MCF 10A (cell line): ENCODE measurements at regions of chr6 and their contacts with region 1.

Region 1: GRCh38 chr6:73739096-73739495 is 43.1 kb downstream of the CD109 start:
- DNase-seq: peak; percentile 68
- H3K4me3 Mint-ChIP-seq: no peak overlapping the region
- H3K27ac Mint-ChIP-seq: no peak overlapping the region
- H3K4me1 Mint-ChIP-seq: peaks cover 28% of the 10 kb centered on the region
- H3K27me3 Mint-ChIP-seq: no peaks in the 10 kb centered on the region
- CTCF ChIP-seq: peak; percentile 75

Region 2: GRCh38 chr6:73803562-73804241 is 64.6 kb after region 1 on chr6:
- CTCF ChIA-PET with region 1: interaction called, 3 read pairs
- POLR2A ChIA-PET with region 1: interaction called, 3 read pairs
- intact Hi-C with region 1: loop called (anchors 1 kb)
- DNase-seq: peak; percentile 80
- H3K4me3 Mint-ChIP-seq: no peak overlapping the region
- H3K27ac Mint-ChIP-seq: peak overlapping the region; percentile 75
- H3K4me1 Mint-ChIP-seq: peaks cover 25% of the 10 kb centered on the region
- H3K27me3 Mint-ChIP-seq: no peaks in the 10 kb centered on the region
- CTCF ChIP-seq: peak; percentile 42

Region 3: DNA sequence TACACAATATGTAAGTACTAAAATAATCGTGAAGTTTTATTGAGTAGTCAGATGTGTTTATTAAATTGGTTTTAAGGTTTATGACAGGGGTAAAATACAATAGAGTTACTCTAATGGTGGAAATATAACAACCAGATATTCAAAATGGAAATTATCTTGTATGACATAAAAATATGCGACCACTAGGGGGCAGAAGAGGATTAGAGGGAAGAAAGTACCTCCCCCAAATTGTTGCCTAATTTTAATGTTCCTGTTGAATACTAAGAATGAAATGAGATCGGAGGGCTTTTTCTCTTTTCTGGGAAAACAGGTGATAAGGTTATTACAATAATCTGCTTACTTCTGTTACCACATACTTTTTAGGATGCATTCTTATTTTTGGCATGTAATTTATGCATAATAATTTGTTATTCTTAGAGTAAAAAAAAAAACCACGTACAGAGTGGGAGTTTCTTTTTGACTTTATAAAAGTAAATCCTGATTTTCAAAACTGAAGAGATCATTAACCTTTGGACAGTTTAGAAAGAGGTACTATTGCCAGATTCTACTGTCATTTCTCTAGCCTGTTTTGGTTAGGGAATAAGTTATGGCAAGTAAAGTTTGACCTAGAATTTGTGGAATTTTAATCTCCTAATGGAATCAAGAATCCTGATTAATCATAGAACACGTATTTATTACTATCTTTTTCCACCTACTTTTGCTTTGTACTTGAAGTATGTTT is 116.1 kb after region 1 on chr6:
- CTCF ChIA-PET with region 1: interaction called, 4 read pairs
- POLR2A ChIA-PET with region 1: no interaction called
- intact Hi-C with region 1: loop called (anchors 2 kb)
- DNase-seq: peak; percentile 77
- H3K4me3 Mint-ChIP-seq: no peak overlapping the region
- H3K27ac Mint-ChIP-seq: no peak overlapping the region
- H3K4me1 Mint-ChIP-seq: no peaks in the 10 kb centered on the region
- H3K27me3 Mint-ChIP-seq: no peaks in the 10 kb centered on the region
- CTCF ChIP-seq: peak; percentile 67

Region 4: GRCh38 chr6:74000666-74001490 is 261.8 kb after region 1 on chr6:
- CTCF ChIA-PET with region 1: no interaction called
- POLR2A ChIA-PET with region 1: no interaction called
- intact Hi-C with region 1: no loop called
- DNase-seq: peak; percentile 8
- H3K4me3 Mint-ChIP-seq: no peak overlapping the region
- H3K27ac Mint-ChIP-seq: no peak overlapping the region
- H3K4me1 Mint-ChIP-seq: peaks cover 4% of the 10 kb centered on the region
- H3K27me3 Mint-ChIP-seq: no peaks in the 10 kb centered on the region
- CTCF ChIP-seq: no peak

Region 5: DNA sequence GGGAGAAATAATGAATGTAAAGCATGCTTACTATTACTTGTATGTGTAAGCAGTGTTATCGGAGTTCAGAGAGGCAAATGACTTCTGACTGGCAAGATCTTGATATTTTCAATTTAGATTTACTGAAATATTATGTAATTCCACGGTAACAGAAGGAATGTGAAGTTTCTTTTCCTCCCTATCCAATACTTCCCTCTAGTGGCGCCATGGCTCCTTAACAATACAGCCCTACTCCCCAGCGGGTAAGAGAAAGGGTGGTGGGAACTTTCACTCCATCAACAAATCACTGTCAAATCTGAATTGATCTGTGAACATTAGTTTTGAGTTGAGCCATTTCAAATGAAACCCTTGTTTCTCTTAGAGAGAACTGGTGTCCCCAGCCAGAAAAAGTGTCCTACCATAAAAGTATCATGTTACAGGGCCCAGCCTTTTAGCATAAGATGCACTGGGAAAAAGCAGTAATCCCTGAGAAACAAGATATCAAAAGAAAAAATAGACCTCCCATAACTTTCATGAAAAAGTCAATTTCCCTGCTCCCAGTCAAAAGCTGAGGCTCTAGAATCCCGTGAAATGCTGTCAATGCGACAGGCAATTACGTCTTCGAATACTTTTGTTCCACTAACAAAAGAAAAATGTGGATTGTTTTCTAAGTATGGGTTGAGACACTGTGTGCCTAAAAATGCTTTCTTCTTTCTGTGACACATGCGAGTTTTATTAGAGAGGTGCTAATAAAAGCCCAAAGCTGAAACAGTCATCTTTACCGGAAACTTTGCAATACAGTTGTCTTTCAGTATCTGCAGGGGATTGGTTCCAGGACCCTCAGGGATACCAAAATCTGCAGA is 1491.6 kb after region 1 on chr6:
- CTCF ChIA-PET with region 1: interaction called, 10 read pairs
- POLR2A ChIA-PET with region 1: no interaction called
- intact Hi-C with region 1: no loop called
- DNase-seq: peak; percentile 67
- H3K4me3 Mint-ChIP-seq: no peak overlapping the region
- H3K27ac Mint-ChIP-seq: no peak overlapping the region
- H3K4me1 Mint-ChIP-seq: no peaks in the 10 kb centered on the region
- H3K27me3 Mint-ChIP-seq: no peaks in the 10 kb centered on the region
- CTCF ChIP-seq: peak; percentile 66